ENCODE measurements at regions of chr2 and their contacts with region 1.

Region 1: DNA sequence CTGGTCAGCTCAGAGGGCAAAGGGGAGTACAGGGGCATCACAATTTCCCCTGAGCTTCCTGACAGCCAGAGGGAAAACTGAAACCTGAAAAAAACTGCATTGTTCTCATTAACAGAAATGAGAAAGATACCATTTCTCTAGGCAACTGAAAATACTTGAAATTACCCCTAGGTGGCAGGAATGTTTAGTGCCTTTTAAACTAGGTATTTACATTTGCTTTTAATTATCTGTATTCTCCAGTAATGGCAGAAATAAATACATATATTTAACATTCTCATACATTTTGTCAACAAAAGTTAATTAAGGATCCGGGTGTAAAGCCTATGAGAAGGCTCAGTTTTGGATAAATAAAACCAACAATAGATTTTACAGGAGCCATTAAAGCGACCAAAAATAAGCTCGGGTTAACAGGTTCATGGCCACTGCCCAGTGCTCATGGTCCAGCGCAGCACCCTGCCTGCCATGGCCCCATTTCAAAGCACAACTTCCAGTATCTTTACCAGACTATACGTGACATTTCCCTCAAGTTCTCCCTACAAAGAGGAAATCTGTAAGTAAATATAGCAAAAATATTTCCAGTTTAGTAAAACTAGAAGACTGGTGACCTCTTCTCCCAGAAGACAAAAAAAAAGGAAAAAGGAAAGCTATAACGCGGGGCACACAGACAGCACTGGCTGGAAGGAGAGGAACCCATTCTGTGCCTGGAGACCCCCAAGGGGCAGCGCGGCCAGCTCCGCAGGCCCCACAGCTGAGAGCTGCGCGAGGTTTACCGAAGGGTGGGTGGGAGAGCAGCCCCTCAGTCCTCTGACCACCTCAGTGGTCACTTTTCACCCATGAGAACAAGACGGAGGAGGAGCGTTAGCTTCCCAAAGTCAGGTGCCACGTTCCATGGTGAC is 34.7 kb downstream of the RPL31 start:
- DNase-seq: peak; percentile 62
- H3K4me3 ChIP-seq: no peak overlapping the region
- H3K27ac ChIP-seq: no peak overlapping the region
- H3K4me1 ChIP-seq: peaks cover 0 to 18% of the 10 kb centered on the region in 2 experiments; a peak in 2 of 4 replicates
- H3K27me3 ChIP-seq: no peaks in the 10 kb centered on the region
- CTCF ChIP-seq: peak; percentile 69
- EP300 ChIP-seq: no peak
- RAD21 ChIP-seq: peak; percentile 79

Region 2: DNA sequence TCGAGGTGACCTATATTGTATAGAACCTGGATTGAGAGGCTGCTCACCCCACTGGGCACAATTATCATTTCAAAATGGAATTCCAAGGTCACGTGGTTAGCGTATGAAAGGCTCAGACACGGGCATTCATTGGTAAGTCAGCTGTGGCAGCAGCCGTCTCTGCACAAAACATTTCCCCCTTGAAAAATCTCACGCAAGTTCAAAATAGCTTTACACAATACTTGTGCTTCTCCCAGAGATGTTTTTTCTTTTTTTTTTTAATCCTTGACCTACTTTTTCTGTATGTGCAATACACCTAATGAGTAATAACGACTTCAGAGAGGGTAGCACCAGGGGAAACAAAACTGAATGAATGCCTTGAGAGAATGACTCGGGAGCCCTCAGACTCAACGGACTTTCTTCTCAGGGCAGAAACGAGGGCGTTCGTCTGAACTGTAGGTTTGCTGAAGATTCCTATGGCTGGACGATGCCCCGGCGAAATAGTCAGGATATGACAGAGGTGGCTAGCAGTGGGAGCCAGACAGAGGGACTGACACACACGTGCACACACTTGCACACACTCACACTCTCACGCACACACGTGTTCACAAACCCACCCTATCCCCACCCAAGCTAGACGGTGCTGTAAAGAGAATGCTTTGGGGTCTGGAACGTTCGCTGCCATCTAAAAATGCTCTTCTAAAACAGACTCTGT is 396.2 kb before region 1 on chr2:
- CTCF ChIA-PET with region 1: no interaction called
- POLR2A ChIA-PET with region 1: no interaction called
- DNase-seq: no peak
- H3K4me3 ChIP-seq: no peak overlapping the region
- H3K27ac ChIP-seq: no peak overlapping the region
- H3K4me1 ChIP-seq: no peaks in the 10 kb centered on the region
- H3K27me3 ChIP-seq: peaks cover 13% of the 10 kb centered on the region; the same call in 1 of the 2 replicates
- CTCF ChIP-seq: no peak
- EP300 ChIP-seq: no peak
- RAD21 ChIP-seq: no peak

Region 3: DNA sequence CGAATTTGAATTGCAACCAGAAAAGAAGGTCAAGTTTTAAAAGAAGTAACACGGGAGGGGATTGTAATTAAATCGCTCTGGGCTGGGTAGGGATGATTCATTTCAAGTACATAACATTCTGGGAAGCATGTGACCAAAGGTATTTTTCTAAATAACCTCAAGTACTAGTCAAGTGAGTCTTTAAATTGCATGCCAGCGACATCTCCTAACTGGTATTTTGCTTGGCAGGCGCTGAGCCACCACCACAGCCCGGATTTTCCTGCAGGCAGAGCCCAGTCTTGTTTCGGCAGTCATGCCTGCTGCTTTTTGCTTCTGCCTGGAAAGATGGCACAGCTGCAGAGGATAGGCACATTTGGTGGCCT is 250.5 kb before region 1 on chr2:
- CTCF ChIA-PET with region 1: no interaction called
- POLR2A ChIA-PET with region 1: no interaction called
- DNase-seq: no peak
- H3K4me3 ChIP-seq: peak overlapping the region in 1 of 2 experiments; percentile 18; a peak in 1 of 4 replicates
- H3K27ac ChIP-seq: peak overlapping the region; percentile 81 to 84; a peak in 3 of 4 replicates
- H3K4me1 ChIP-seq: peaks cover 0 to 11% of the 10 kb centered on the region in 2 experiments; a peak in 3 of 4 replicates
- H3K27me3 ChIP-seq: no peaks in the 10 kb centered on the region
- CTCF ChIP-seq: no peak
- EP300 ChIP-seq: peak; percentile 7 to 87; a peak in 2 of 4 replicates
- RAD21 ChIP-seq: no peak

Region 4: DNA sequence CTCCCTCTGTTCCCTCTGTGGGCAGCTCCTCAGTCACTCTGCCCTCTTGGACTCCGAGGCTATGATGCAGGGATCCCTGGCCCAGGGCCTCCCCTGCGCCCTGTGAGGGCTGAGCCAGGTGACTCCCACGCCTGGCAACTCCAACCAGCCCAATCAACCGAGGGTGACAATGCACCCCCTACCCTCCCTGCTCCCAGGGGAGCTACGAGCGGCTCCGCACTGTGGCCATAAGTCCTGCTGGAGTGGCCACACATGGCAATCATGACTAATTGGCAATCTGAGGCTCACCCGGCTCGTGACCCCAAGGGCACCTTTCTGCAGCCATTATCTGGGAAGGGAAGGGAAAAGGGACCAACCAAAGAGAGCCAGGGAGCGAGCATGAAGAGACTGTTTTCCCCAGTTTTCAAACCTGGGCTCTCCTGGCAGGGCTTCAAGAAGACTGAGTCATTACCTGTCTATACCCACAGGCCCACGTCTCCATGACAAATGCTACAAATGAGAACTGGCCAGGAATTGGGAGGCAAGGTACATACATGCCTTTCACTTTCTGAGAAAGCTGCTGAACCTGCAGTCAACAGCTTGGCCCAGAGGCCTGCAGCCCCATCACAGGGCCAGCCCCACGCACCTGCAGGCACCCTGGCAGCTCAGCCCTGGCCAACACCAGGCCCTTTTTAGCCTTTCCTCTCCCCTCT is 10.4 kb after region 1 on chr2:
- CTCF ChIA-PET with region 1: interaction called, 25 read pairs
- POLR2A ChIA-PET with region 1: no interaction called
- DNase-seq: no peak
- H3K4me3 ChIP-seq: no peak overlapping the region
- H3K27ac ChIP-seq: no peak overlapping the region
- H3K4me1 ChIP-seq: peaks cover 0 to 9% of the 10 kb centered on the region in 2 experiments; a peak in 1 of 4 replicates
- H3K27me3 ChIP-seq: no peaks in the 10 kb centered on the region
- CTCF ChIP-seq: no peak
- EP300 ChIP-seq: no peak
- RAD21 ChIP-seq: no peak

Region 5: GRCh38 chr2:101151141-101151858 is 114.5 kb after region 1 on chr2 and contains the start of gene TBC1D8:
- CTCF ChIA-PET with region 1: interaction called, 99 read pairs
- POLR2A ChIA-PET with region 1: interaction called, 4 read pairs
- DNase-seq: peak; percentile 97
- H3K4me3 ChIP-seq: peak within 1 kb of the TSS; percentile 76 to 78
- H3K27ac ChIP-seq: peak within 1 kb of the TSS; percentile 31 to 91; a peak in 3 of 4 replicates
- H3K4me1 ChIP-seq: peaks cover 0 to 28% of the 10 kb centered on the region in 2 experiments; a peak in 2 of 4 replicates
- H3K27me3 ChIP-seq: no peaks in the 10 kb centered on the region
- CTCF ChIP-seq: no peak
- EP300 ChIP-seq: 0 out of 4 replicates have a peak, but pooled peaks of 1 of the 2 experiments have one; percentile 16
- RAD21 ChIP-seq: no peak
- polyA plus RNA-seq, gene TBC1D8: 5.3 and 7.0 TPM in 2 replicates

Region 6: GRCh38 chr2:101197215-101197745 is 160.5 kb after region 1 on chr2:
- CTCF ChIA-PET with region 1: interaction called, 80 read pairs
- POLR2A ChIA-PET with region 1: no interaction called
- DNase-seq: peak; percentile 33
- H3K4me3 ChIP-seq: no peak overlapping the region
- H3K27ac ChIP-seq: no peak overlapping the region
- H3K4me1 ChIP-seq: no peaks in the 10 kb centered on the region
- H3K27me3 ChIP-seq: no peaks in the 10 kb centered on the region
- CTCF ChIP-seq: peak; percentile 39
- EP300 ChIP-seq: no peak
- RAD21 ChIP-seq: no peak

Measured in SK-N-SH (cell line).